Dorsolateral prefrontal cortex (tissue), 120 donors: ENCODE measurements at regions of chr20 and their contacts with region 1.

Region 1: DNA sequence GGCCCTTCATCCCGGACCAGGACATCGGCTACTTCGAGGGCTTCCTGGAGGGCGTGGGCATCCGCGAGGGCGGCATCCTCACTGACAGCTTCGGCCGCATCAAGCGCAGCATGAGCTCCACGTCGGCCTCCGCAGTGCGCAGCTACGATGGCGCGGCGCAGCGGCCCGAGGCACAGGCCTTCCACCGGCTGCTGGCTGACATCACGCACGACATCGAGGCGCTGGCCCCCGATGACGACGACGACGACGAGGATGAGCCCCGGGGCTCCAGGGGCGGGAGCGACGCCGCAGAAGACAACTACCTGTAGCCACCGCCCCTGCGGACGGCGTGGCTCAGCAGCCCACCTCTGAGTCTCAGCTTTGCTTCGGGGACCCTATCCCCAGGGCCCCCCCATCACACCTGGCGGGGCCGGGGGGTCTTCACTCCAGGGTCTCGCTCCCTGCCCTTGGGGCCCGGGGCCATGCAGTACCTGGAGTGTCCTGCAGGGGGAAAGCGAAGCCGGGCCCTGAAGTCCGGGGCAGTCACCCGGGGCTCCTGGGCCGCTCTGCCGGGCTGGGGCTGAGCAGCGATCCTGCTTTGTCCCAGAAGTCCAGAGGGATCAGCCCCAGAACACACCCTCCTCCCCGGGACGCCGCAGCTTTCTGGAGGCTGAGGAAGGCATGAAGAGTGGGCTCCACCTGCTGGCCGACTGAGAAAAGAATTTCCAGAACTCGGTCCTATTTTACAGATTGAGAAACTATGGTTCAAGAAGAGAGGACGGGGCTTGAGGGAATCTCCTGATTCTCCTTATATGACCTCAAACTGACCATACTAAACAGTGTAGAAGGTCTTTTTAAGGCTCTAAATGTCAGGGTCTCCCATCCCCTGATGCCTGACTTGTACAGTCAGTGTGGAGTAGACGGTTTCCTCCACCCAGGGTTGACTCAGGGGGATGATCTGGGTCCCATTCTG is 20.8 kb upstream of the HCK start:
- DNase-seq: peak in 9 of 10 donors; percentile 54 to 87 (median 74)
- H3K4me3 ChIP-seq: peak overlapping the region in 58 of 59 donors; percentile 5 to 62 (median 50)
- H3K27ac ChIP-seq: peak overlapping the region in 3 of 59 donors; percentile 19 to 55 (median 29)
- H3K27me3 ChIP-seq: peaks cover 0 to 27% (median 0%) of the 10 kb centered on the region in 45 donors
- CTCF ChIP-seq: peak; percentile 67 to 96 (median 88)

Region 2: GRCh38 chr20:31698803-31699718 is 332.2 kb before region 1 on chr20:
- intact Hi-C with region 1: no loop called
- DNase-seq: peak in 7 of 10 donors; percentile 50 to 80 (median 61)
- H3K4me3 ChIP-seq: peak overlapping the region in 13 of 59 donors; percentile 2 to 36 (median 16)
- H3K27ac ChIP-seq: peak overlapping the region; percentile 73 to 100 (median 91)
- H3K27me3 ChIP-seq: no peaks in the 10 kb centered on the region
- CTCF ChIP-seq: peak in 1 of 56 donors; percentile 10

Region 3: DNA sequence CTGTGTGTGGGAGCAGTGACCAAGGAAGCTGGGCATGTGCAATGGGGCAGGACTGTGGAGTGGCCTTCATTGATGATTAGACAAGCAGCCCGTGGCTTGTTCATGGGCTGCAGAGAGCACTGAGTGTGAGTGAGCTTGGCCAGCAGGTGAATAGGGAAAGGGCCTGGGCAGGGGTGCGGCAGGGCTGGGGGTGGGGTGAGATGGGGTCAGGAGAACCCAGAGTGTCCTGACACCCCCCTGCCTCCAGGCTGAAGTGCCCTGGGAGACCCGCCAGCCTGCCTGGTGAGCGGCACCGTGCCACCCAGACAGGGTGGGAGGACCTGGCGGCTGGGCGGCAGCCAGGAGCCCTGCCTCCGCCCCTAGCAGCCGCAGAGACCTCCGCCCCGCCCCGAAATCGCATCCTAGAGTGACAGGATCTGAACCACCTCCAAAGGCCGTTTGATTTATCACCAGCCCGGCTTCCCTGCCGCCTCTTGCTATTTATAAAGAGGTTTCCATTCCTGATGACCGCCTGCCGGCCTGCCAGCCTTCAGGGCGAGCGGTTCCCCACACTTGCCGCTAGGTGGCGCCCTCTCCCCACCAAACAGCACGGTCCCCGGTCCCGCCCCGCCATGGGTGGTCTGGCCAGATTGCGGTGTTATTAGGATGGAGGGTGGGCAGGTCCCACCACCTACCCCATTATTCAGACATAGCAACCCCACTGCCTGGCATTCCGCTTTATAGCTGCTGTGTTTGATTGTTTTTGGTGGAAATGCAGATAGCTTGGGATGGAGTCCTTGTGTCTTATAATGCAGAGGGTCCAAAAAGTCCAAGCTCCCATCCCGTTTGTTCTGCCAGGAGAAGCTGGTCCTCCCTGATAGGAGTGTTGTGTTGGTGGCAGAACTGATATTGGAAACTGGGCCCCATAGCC is 208.6 kb before region 1 on chr20:
- intact Hi-C with region 1: loop called (anchors 2 to 5 kb)
- DNase-seq: peak; percentile 53 to 91 (median 66)
- H3K4me3 ChIP-seq: peak overlapping the region in 52 of 59 donors; percentile 8 to 62 (median 43)
- H3K27ac ChIP-seq: peak overlapping the region in 6 of 59 donors; percentile 13 to 65 (median 42)
- H3K27me3 ChIP-seq: peaks cover 0 to 3% (median 0%) of the 10 kb centered on the region in 45 donors
- CTCF ChIP-seq: peak; percentile 85 to 100 (median 99)

Region 4: GRCh38 chr20:31835977-31836852 is 195.1 kb before region 1 on chr20:
- intact Hi-C with region 1: loop called in 1 of 2 experiments (anchors 5 kb)
- DNase-seq: peak; percentile 37 to 88 (median 72)
- H3K4me3 ChIP-seq: no peak overlapping the region
- H3K27ac ChIP-seq: peak overlapping the region in 30 of 59 donors; percentile 1 to 75 (median 36)
- H3K27me3 ChIP-seq: no peaks in the 10 kb centered on the region
- CTCF ChIP-seq: peak in 2 of 56 donors; percentile 7 to 10

Region 5: GRCh38 chr20:31849455-31849925 is 181.8 kb before region 1 on chr20:
- intact Hi-C with region 1: loop called (anchors 5 to 10 kb)
- DNase-seq: no peak
- H3K4me3 ChIP-seq: no peak overlapping the region
- H3K27ac ChIP-seq: no peak overlapping the region
- H3K27me3 ChIP-seq: peaks cover 0 to 44% (median 15%) of the 10 kb centered on the region in 45 donors
- CTCF ChIP-seq: no peak

Region 6: GRCh38 chr20:31861346-31862156 is 169.7 kb before region 1 on chr20:
- intact Hi-C with region 1: loop called in 1 of 2 experiments (anchors 10 kb)
- DNase-seq: peak in 1 of 10 donors; percentile 63
- H3K4me3 ChIP-seq: peak overlapping the region; percentile 29 to 73 (median 59)
- H3K27ac ChIP-seq: peak overlapping the region in 2 of 59 donors; percentile 57 to 60
- H3K27me3 ChIP-seq: peaks cover 0 to 17% (median 0%) of the 10 kb centered on the region in 45 donors
- CTCF ChIP-seq: no peak

Region 7: DNA sequence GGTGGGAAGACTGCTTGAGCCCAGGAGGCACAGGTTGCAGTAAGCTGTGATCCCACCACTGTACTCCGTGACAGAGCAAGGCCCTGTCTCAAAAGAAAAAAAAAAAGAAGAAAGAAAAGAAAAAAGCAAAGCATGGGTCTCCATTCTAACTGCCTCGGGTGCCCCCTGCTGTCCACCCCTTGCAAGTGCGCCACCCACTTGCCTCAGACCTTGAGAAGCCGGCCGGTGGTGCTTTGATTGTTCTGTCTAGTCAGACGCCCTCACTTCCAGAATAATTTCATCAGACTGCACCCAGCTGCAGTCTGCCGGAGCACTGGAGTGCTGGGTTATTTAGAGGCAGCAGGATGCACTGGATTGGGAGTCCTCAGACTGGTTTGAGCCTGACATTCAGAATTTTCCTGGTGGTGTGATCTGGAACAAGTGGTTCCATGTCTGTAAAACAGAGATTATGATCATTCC is 60.6 kb after region 1 on chr20:
- intact Hi-C with region 1: loop called in 1 of 2 experiments (anchors 5 kb)
- DNase-seq: peak; percentile 71 to 91 (median 80)
- H3K4me3 ChIP-seq: peak overlapping the region in 1 of 59 donors; percentile 10
- H3K27ac ChIP-seq: no peak overlapping the region
- H3K27me3 ChIP-seq: no peaks in the 10 kb centered on the region
- CTCF ChIP-seq: peak; percentile 74 to 97 (median 90)

Region 8: DNA sequence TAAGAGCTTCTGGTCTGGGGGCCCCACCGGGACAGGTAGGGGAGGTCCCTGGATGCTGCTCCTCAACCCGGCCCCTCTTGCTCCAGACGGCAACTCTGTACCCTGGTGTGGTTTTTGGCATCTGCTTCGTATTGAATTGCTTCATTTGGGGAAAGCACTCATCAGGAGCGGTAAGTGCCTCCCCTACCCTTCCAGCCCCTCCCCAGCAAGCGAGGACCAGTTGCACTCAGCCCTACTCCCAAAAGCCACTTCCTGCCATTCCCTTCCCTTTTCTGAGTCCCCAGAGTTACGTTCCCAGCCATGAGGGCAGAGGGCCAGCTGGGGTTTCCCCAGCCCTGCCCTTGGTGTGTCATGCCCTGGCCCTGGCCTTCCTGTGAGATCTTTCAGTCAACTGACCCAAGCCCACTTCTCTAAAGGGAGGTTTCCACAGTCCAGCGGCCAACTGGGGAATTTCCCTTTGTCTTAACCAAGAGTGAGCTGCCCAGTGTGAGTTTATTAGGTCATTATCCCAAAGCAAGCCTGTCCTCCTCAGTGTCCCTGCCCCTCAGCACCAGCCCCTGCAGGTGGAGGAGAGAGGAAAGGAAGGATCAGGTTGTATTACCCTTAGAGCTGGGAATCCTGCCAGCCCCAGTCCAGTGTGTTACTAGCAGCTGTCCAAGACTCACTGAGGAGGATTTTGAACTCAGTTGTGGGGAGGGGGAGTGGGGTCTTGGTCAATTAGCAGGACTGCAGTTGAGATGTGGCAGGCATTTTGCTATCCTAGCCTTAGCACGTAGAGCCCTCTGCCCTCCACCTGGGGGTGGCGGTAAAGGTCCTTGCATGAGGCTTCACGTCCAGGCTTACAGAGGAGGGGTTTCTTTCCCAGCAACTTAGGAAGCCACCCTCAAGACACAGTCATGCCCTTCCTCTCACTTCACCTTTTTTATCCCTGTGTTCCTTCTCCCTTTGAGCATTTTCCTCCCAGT is 124.0 kb after region 1 on chr20:
- intact Hi-C with region 1: no loop called
- DNase-seq: peak in 6 of 10 donors; percentile 29 to 63 (median 49)
- H3K4me3 ChIP-seq: no peak overlapping the region
- H3K27ac ChIP-seq: peak overlapping the region in 24 of 59 donors; percentile 7 to 76 (median 37)
- H3K27me3 ChIP-seq: no peaks in the 10 kb centered on the region
- CTCF ChIP-seq: peak in 2 of 56 donors; percentile 12 to 14